HEK293 (cell line): ENCODE measurements at regions of chr2 and their contacts with region 1.

Region 1: GRCh38 chr2:182763311-182763912 is 47.4 kb downstream of the DNAJC10 start:
- H3K4me3 ChIP-seq: no peak overlapping the region
- H3K27ac ChIP-seq: no peak overlapping the region
- H3K4me1 ChIP-seq: no peaks in the 10 kb centered on the region
- CTCF ChIP-seq: peak; percentile 51; the same call in 1 of the 2 replicates

Region 2: GRCh38 chr2:182779323-182779722 is 15.9 kb after region 1 on chr2:
- CTCF ChIA-PET with region 1: interaction called, 10 read pairs
- POLR2A ChIA-PET with region 1: no interaction called
- H3K4me3 ChIP-seq: no peak overlapping the region
- H3K27ac ChIP-seq: no peak overlapping the region
- H3K4me1 ChIP-seq: no peaks in the 10 kb centered on the region
- CTCF ChIP-seq: no peak